ENCODE measurements at regions of chr1 and their contacts with region 1.

Region 1: GRCh38 chr1:204438628-204439027 is 27.0 kb upstream of the PPP1R15B start:
- DNase-seq: peak; percentile 99
- H3K4me3 ChIP-seq: no peak overlapping the region
- H3K27ac ChIP-seq: peak overlapping the region; percentile 84
- H3K4me1 ChIP-seq: peaks cover 55% of the 10 kb centered on the region
- H3K27me3 ChIP-seq: no peaks in the 10 kb centered on the region
- CTCF ChIP-seq: no peak

Region 2: GRCh38 chr1:204417231-204417997 is 21.2 kb before region 1 on chr1:
- CTCF ChIA-PET with region 1: no interaction called
- dilution Hi-C with region 1: no loop called
- in situ Hi-C with region 1: no loop called
- intact Hi-C with region 1: loop called (anchors 2 kb)
- DNase-seq: peak; percentile 98
- H3K4me3 ChIP-seq: peak overlapping the region; percentile 24 to 45 (median 33)
- H3K27ac ChIP-seq: peak overlapping the region; percentile 96
- H3K4me1 ChIP-seq: peaks cover 32% of the 10 kb centered on the region
- H3K27me3 ChIP-seq: no peaks in the 10 kb centered on the region
- CTCF ChIP-seq: no peak

Region 3: DNA sequence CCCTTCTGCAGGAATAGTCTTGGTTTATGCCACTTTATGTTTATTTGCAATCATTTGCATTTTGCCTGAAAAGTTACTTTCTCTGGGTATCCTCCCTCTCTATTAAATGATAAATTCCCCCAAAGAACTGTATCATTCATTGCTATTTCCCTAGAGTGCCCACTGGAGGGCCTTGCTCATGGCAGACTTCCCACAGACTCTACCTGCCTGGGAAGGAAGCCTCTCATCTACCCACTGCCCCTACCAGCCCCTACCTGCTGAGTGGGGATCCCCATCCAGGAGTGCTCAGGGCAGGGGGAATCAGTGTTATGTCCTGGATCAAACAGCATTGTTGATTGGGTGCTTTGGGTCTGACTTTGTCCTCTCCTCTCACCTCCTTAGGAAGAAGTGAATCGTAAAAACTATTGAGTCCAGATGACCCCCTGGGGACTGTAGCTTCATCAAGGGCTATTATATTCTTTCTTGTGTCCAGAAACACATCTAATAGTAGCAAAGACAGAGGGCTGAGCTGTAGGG is 253.8 kb after region 1 on chr1:
- CTCF ChIA-PET with region 1: no interaction called
- dilution Hi-C with region 1: no loop called
- in situ Hi-C with region 1: no loop called
- intact Hi-C with region 1: no loop called
- DNase-seq: no peak
- H3K4me3 ChIP-seq: no peak overlapping the region
- H3K27ac ChIP-seq: no peak overlapping the region
- H3K4me1 ChIP-seq: no peaks in the 10 kb centered on the region
- H3K27me3 ChIP-seq: peaks cover 2% of the 10 kb centered on the region
- CTCF ChIP-seq: peak in 1 of 2 donors; percentile 22

Measured in mammary epithelial cell (primary cell).